Activated naive CD4-positive, alpha-beta T cell treated with anti-CD3 and anti-CD28 coated beads for 36 hours (primary cell): ENCODE measurements at regions of chr6 and their contacts with region 1.

Region 1: DNA sequence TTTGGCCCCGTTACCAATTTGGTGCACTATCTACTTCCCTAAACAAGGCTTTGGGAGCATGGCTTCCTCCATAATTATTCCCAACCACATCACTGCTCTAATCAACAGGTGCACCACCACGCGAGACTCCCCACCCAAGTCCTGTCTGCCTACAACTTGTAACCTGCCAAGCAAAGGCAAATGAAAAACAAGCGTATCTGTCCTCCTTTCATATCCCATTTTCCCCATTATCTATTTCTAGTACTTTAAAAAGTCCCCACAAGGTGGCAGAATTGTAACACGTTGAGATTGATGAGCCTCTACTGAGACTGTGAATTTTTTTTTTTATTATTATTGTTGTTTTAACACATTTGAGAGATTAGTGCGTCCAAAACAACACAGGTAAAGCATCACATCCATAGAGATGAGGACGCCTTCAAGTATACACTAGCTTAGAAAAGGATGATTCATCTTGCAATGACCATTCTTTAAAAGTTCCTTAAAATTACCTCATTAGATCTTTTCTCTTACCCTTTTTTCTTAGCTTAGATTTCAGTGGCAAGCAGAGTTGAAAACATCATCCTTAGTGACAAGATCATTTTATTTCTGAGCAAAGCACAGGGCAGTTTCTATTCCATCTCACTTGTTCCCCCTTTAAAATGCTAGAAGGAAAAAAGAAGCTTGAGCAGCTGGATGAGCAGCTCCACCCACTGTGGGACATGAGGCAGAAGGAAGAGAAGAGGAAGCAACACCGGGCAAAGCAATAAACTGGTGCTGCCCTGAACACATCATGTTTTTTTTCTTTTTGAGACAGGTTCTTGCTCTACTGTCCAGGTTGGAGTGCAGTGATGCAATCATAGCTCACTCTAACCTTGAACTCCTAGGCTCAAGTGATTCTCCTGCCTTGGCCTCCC is 210.8 kb downstream of the ARHGAP18 start:
- DNase-seq: no peak
- H3K4me3 Mint-ChIP-seq: peak overlapping the region; percentile 64
- H3K27ac Mint-ChIP-seq: peak overlapping the region; percentile 91
- H3K4me1 Mint-ChIP-seq: peaks cover 72% of the 10 kb centered on the region
- H3K27me3 Mint-ChIP-seq: no peaks in the 10 kb centered on the region

Region 2: GRCh38 chr6:127938701-127939100 is 1560.5 kb before region 1 on chr6:
- CTCF ChIA-PET with region 1: no interaction called
- intact Hi-C with region 1: loop called (anchors 10 kb)
- DNase-seq: no peak
- H3K4me3 Mint-ChIP-seq: no peak overlapping the region
- H3K27ac Mint-ChIP-seq: no peak overlapping the region
- H3K4me1 Mint-ChIP-seq: peaks cover 60% of the 10 kb centered on the region
- H3K27me3 Mint-ChIP-seq: no peaks in the 10 kb centered on the region

Region 3: GRCh38 chr6:129417416-129418086 is 81.6 kb before region 1 on chr6:
- CTCF ChIA-PET with region 1: no interaction called
- intact Hi-C with region 1: no loop called
- DNase-seq: no peak
- H3K4me3 Mint-ChIP-seq: no peak overlapping the region
- H3K27ac Mint-ChIP-seq: no peak overlapping the region
- H3K4me1 Mint-ChIP-seq: no peaks in the 10 kb centered on the region
- H3K27me3 Mint-ChIP-seq: no peaks in the 10 kb centered on the region

Region 4: GRCh38 chr6:129567374-129567773 is 68.2 kb after region 1 on chr6:
- CTCF ChIA-PET with region 1: interaction called, 45 read pairs
- intact Hi-C with region 1: loop called (anchors 1 kb)
- DNase-seq: peak; percentile 79
- H3K4me3 Mint-ChIP-seq: no peak overlapping the region
- H3K27ac Mint-ChIP-seq: no peak overlapping the region
- H3K4me1 Mint-ChIP-seq: peaks cover 3% of the 10 kb centered on the region
- H3K27me3 Mint-ChIP-seq: no peaks in the 10 kb centered on the region

Region 5: DNA sequence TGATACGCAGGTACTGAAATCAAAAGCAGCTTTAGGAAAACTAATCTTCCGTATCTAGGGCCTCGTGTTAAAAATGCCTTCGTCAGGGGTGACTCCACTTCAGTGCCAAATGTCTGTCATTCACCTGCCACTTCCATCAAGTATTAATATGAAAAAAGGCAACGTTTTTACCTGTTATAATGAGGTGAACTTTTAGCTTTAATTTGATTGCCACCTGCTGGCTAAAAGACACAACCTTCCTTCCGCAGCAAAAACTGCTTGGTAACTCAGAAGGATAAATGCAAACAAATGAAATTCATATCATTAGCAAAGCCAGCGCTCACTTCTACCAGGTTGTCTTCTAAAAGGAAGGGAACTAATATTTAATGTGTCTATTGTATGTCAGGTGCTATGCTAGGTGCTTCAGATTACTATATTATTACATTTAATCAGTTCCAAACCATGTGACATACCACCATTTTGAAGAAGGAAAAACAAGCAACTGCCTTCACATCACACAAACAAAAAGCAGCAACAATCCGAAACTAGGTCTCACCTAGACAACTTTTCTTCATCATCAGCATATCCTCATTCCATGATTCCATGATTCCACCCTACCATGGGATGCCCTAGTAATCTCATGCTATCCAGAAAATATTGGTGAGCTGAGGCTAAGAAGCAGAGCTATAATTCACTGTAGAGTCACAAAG is 231.4 kb after region 1 on chr6:
- CTCF ChIA-PET with region 1: interaction called, 21 read pairs
- intact Hi-C with region 1: loop called (anchors 1 kb)
- DNase-seq: peak; percentile 47
- H3K4me3 Mint-ChIP-seq: no peak overlapping the region
- H3K27ac Mint-ChIP-seq: no peak overlapping the region
- H3K4me1 Mint-ChIP-seq: peaks cover 10% of the 10 kb centered on the region
- H3K27me3 Mint-ChIP-seq: no peaks in the 10 kb centered on the region

Region 6: DNA sequence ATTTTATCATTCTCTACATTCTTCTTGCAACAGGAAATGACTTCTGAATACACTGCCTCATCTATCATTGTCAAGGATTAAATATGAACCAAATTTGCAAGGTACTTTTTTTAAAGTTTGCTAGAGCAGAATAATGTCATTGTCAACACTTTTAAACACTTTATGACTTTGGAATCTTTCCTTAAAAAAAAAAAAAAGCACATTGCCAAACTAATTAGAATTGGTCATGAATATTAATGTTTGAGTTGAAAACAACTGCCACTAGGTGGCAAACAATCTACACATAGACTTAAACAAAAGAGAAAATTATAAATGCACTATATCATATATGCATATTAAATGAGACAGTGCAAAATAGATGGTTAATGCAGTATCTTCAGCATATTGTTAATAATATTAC is 394.4 kb after region 1 on chr6:
- CTCF ChIA-PET with region 1: no interaction called
- intact Hi-C with region 1: loop called (anchors 2 kb)
- DNase-seq: no peak
- H3K4me3 Mint-ChIP-seq: no peak overlapping the region
- H3K27ac Mint-ChIP-seq: no peak overlapping the region
- H3K4me1 Mint-ChIP-seq: peaks cover 12% of the 10 kb centered on the region
- H3K27me3 Mint-ChIP-seq: peaks cover 6% of the 10 kb centered on the region

Region 7: DNA sequence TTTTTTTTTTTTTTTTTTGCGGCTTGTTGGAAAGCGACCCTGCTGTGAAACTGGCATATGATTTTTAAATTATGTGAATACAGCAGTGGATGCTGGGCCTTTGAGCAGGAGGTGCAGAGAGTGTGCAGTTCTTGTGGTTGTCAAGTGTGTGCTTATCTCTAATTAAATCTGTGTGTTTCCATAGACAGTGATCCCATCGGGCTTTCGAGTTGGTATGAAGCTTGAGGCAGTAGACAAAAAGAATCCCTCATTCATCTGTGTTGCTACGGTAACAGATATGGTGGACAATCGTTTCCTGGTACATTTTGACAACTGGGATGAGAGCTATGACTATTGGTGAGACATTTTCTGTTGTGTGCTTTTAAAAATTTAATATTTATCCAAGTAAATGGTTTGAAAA is 571.6 kb after region 1 on chr6:
- CTCF ChIA-PET with region 1: no interaction called
- intact Hi-C with region 1: no loop called
- DNase-seq: no peak
- H3K4me3 Mint-ChIP-seq: no peak overlapping the region
- H3K27ac Mint-ChIP-seq: no peak overlapping the region
- H3K4me1 Mint-ChIP-seq: peaks cover 10% of the 10 kb centered on the region
- H3K27me3 Mint-ChIP-seq: no peaks in the 10 kb centered on the region

Region 8: DNA sequence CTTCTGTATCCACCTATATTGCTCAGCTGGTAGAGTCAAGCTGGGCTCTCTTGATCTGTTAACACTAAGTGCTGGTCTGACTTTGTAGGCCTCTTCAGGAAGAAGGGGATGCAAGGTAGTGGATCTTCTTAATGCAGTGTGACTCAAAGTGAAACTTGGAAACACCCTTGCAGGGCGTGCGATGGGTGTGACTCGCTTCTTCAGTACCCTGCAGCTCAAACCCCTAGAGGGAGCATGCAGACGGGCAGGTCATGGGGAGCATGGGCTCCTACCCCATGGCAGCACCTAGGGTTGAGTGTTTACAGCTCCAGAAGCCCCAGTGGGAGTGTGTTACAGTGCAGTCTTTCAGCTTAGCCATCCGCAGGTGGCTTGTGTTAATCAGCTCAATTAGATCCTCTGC is 724.3 kb after region 1 on chr6:
- CTCF ChIA-PET with region 1: no interaction called
- intact Hi-C with region 1: loop called (anchors 10 kb)
- DNase-seq: peak; percentile 82
- H3K4me3 Mint-ChIP-seq: no peak overlapping the region
- H3K27ac Mint-ChIP-seq: no peak overlapping the region
- H3K4me1 Mint-ChIP-seq: peaks cover 22% of the 10 kb centered on the region
- H3K27me3 Mint-ChIP-seq: no peaks in the 10 kb centered on the region